WTC11 (cell line): ENCODE measurements at regions of chr3 and their contacts with region 1.

Region 1: DNA sequence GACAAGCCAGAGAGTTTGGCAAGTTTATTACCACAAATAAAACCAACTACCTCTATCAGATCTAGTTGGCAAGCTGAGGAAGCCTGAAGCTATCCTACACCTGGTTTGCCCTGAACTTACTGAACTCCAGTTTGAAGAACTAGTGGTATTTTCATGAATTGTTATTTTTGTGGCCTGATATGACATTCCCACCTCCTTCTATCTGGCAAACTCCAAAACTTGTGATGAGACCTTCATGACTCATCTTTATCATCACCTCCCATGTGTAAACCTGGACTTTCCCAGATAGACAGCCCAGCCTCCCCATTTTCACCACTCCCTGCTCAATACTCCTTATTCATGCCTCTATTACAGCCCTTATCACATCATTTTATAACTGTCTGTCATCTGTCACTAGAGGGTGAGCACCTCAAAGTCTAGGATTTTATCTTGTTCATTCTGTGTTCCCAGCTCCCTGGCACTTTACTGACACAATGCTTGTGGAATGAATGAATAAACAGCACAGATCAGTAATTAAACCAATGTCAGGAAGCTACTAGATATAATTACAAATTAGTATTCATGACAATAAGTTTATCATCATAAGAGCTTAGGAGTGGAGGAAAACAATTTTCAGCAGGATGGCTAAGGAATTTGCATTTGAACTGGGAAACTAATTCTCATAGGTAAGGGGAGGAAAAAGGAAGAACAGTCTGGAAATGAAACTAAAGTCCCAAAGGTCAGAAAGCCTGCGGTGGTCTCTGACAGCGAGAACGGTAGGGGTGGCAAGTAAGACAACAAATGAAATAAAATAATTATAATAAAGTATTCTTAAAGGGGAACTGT is 13.2 kb upstream of the TRANK1 start:
- DNase-seq: no peak
- ATAC-seq: no peak
- H3K4me3 Mint-ChIP-seq: no peak overlapping the region
- H3K27ac Mint-ChIP-seq: no peak overlapping the region
- H3K4me1 Mint-ChIP-seq: peaks cover 13% of the 10 kb centered on the region; the same call in 1 of the 2 replicates
- H3K27me3 Mint-ChIP-seq: no peaks in the 10 kb centered on the region
- CTCF ChIP-seq: no peak

Region 2: GRCh38 chr3:36663666-36664291 is 294.3 kb before region 1 on chr3:
- CTCF ChIA-PET with region 1: no interaction called
- POLR2A ChIA-PET with region 1: no interaction called
- DNase-seq: no peak
- ATAC-seq: no peak
- H3K4me3 Mint-ChIP-seq: no peak overlapping the region
- H3K27ac Mint-ChIP-seq: no peak overlapping the region
- H3K4me1 Mint-ChIP-seq: 0 out of 2 replicates have a peak, but pooled peaks cover 4% of the 10 kb centered on the region
- H3K27me3 Mint-ChIP-seq: no peaks in the 10 kb centered on the region
- CTCF ChIP-seq: no peak

Region 3: GRCh38 chr3:36792342-36792741 is 165.7 kb before region 1 on chr3:
- CTCF ChIA-PET with region 1: interaction called, 35 read pairs
- POLR2A ChIA-PET with region 1: no interaction called
- DNase-seq: peak; percentile 71
- ATAC-seq: peak; percentile 100
- H3K4me3 Mint-ChIP-seq: no peak overlapping the region
- H3K27ac Mint-ChIP-seq: no peak overlapping the region
- H3K4me1 Mint-ChIP-seq: peaks cover 5% of the 10 kb centered on the region; the same call in 1 of the 2 replicates
- H3K27me3 Mint-ChIP-seq: peaks cover 3% of the 10 kb centered on the region
- CTCF ChIP-seq: peak; percentile 52; the same call in 1 of the 2 replicates

Region 4: GRCh38 chr3:36868614-36869436 is 89.2 kb before region 1 on chr3:
- CTCF ChIA-PET with region 1: interaction called, 31 read pairs
- POLR2A ChIA-PET with region 1: no interaction called
- DNase-seq: peak; percentile 54
- ATAC-seq: peak; percentile 87
- H3K4me3 Mint-ChIP-seq: no peak overlapping the region
- H3K27ac Mint-ChIP-seq: no peak overlapping the region
- H3K4me1 Mint-ChIP-seq: peaks cover 6% of the 10 kb centered on the region
- H3K27me3 Mint-ChIP-seq: no peaks in the 10 kb centered on the region; the same call in 1 of the 2 replicates
- CTCF ChIP-seq: peak; percentile 72

Region 5: DNA sequence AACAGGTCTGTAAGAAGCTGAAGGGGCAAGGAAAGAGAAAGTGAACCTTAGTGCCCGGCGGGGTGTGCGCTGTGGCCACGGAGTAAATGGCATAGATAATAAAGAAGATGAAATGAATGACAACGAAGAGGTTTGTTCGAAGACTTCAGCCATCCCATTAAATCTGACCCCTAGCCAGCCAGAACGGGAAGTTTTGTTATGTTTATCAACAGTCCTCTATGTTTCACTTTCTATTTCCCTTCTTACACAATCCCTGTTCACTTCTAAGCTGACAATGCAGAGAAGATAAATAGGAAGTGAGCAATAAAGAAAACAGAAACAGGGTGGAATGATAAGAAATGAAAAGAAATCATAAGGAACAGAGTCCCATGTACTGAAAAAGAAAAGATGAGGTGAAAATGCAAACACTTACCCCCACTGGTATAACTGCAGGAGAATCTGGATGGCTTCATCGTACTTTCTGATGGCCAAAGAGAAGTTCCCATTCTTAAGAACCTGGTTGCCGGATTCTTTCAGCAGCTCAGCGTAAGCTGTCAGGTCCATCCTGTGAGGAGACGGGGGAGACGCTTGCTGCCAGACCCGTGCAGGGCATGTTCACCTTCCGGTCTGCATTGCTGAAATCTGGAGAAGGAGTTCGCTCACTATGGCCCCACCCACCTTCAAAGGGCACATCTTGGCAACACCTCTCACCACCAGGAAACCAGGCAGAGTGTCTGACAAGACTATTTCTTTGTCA is 50.0 kb before region 1 on chr3:
- CTCF ChIA-PET with region 1: interaction called, 103 read pairs
- POLR2A ChIA-PET with region 1: no interaction called
- DNase-seq: no peak
- ATAC-seq: no peak; the same call in 1 of the 2 replicates
- H3K4me3 Mint-ChIP-seq: no peak overlapping the region
- H3K27ac Mint-ChIP-seq: no peak overlapping the region
- H3K4me1 Mint-ChIP-seq: peaks cover 18% of the 10 kb centered on the region
- H3K27me3 Mint-ChIP-seq: no peaks in the 10 kb centered on the region
- CTCF ChIP-seq: no peak

Region 6: DNA sequence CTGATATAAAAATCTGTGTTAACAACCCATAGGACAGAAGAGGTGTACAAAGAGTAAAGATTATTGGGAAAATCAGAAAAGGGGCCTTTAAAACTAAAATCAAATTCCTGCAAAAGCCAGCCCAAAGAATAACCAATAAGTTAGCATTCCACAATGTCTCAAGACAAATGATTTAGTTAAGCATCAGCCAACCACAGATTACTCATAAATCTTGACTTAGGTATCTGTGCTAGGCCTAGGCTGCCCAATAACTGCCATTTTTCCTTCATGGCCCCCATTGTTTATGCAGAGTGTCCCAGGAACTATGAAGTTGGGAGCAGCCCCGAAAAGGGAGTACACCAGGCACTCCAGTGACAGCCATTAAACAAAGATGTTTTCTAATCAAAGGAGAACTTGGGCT is 20.6 kb before region 1 on chr3:
- CTCF ChIA-PET with region 1: interaction called, 55 read pairs
- POLR2A ChIA-PET with region 1: no interaction called
- DNase-seq: no peak
- ATAC-seq: no peak
- H3K4me3 Mint-ChIP-seq: no peak overlapping the region
- H3K27ac Mint-ChIP-seq: peak overlapping the region; percentile 91
- H3K4me1 Mint-ChIP-seq: peaks cover 60% of the 10 kb centered on the region
- H3K27me3 Mint-ChIP-seq: peaks cover 8% of the 10 kb centered on the region
- CTCF ChIP-seq: no peak

Region 7: GRCh38 chr3:36969540-36970432 is 11.7 kb after region 1 on chr3:
- CTCF ChIA-PET with region 1: interaction called, 14 read pairs
- POLR2A ChIA-PET with region 1: no interaction called
- DNase-seq: no peak
- ATAC-seq: peak; percentile 75
- H3K4me3 Mint-ChIP-seq: no peak overlapping the region
- H3K27ac Mint-ChIP-seq: peak overlapping the region; percentile 61
- H3K4me1 Mint-ChIP-seq: peaks cover 30% of the 10 kb centered on the region
- H3K27me3 Mint-ChIP-seq: no peaks in the 10 kb centered on the region
- CTCF ChIP-seq: no peak